ENCODE measurements at regions of chr6 and their contacts with region 1.

Region 1: GRCh38 chr6:7725849-7726415 is at the start of gene BMP6:
- DNase-seq: peak; percentile 69
- ATAC-seq: peak; percentile 77
- H3K4me3 ChIP-seq: peak within 1 kb of the TSS; percentile 61 to 66
- H3K27ac ChIP-seq: no peak within 1 kb of the TSS
- H3K4me1 ChIP-seq: peaks cover 24% of the 10 kb centered on the region
- H3K27me3 ChIP-seq: no peaks in the 10 kb centered on the region
- CTCF ChIP-seq: no peak
- total RNA-seq, gene BMP6: 13.6 TPM

Region 2: DNA sequence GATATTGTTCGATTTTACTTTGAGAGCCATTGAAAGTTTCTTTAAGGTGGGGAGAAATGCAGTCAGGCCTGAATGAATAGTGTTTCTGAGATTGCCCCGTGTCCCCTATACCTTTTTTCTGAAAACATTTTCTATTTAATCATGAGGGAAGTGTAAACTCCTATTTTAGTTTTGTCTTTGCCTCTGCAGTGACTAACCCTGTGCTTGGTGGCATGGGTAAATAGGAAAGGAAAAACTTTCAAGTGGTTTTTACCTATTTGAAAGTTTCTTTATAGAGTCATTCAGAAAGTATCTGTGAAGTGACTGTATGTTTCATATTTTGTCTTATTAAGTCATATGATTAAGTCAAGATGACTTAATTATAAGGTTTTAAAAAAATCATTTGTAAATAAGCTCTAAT is 121.4 kb before region 1 on chr6:
- CTCF ChIA-PET with region 1: no interaction called
- POLR2A ChIA-PET with region 1: no interaction called
- in situ Hi-C with region 1: no loop called
- intact Hi-C with region 1: no loop called
- DNase-seq: no peak
- ATAC-seq: no peak
- H3K4me3 ChIP-seq: no peak overlapping the region
- H3K27ac ChIP-seq: no peak overlapping the region
- H3K4me1 ChIP-seq: no peaks in the 10 kb centered on the region
- H3K27me3 ChIP-seq: no peaks in the 10 kb centered on the region
- CTCF ChIP-seq: no peak

Region 3: DNA sequence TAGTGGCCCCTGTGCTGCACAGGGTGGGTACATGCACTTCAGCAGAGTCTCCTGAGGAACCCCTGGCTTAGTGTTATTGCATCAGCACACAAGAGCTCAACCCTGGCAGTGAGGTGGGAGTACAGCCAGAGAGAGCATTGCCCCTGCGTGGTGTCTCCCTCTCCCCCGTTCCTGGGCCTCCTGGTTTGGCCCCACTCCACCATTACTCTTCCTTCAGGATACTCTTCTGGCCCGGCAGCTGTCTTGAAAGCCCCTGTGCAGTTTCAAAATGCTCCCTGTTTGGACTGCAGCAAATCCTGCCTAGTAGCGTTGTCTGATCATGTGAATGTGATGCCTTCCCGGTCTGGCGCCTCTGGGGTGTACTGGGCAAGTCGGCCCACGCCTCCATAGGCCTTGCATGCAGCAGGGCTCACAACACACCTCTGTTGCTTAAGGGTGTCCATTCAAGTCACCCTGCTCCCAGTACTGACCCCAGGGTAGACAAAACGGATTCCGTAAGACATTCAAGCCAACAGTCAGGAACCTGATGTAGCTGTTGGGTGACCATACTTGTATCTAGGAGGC is 152.6 kb after region 1 on chr6:
- CTCF ChIA-PET with region 1: interaction called, 7 read pairs
- POLR2A ChIA-PET with region 1: no interaction called
- in situ Hi-C with region 1: no loop called
- intact Hi-C with region 1: loop called (anchors 10 kb)
- DNase-seq: no peak
- ATAC-seq: peak; percentile 24; the same call in 1 of the 2 replicates
- H3K4me3 ChIP-seq: no peak overlapping the region
- H3K27ac ChIP-seq: no peak overlapping the region
- H3K4me1 ChIP-seq: no peaks in the 10 kb centered on the region
- H3K27me3 ChIP-seq: no peaks in the 10 kb centered on the region
- CTCF ChIP-seq: no peak

Region 4: GRCh38 chr6:7992002-7992815 is 266.3 kb after region 1 on chr6:
- CTCF ChIA-PET with region 1: interaction called, 3 read pairs
- POLR2A ChIA-PET with region 1: no interaction called
- in situ Hi-C with region 1: no loop called
- intact Hi-C with region 1: loop called (anchors 5 kb)
- DNase-seq: no peak
- ATAC-seq: peak; percentile 84
- H3K4me3 ChIP-seq: no peak overlapping the region
- H3K27ac ChIP-seq: no peak overlapping the region
- H3K4me1 ChIP-seq: no peaks in the 10 kb centered on the region
- H3K27me3 ChIP-seq: no peaks in the 10 kb centered on the region
- CTCF ChIP-seq: peak; percentile 61

Region 5: GRCh38 chr6:8059129-8059528 is 333.2 kb after region 1 on chr6:
- CTCF ChIA-PET with region 1: interaction called, 5 read pairs
- POLR2A ChIA-PET with region 1: no interaction called
- in situ Hi-C with region 1: no loop called
- intact Hi-C with region 1: loop called (anchors 5 kb)
- DNase-seq: no peak
- ATAC-seq: no peak
- H3K4me3 ChIP-seq: no peak overlapping the region
- H3K27ac ChIP-seq: no peak overlapping the region
- H3K4me1 ChIP-seq: peaks cover 10% of the 10 kb centered on the region; the same call in 1 of the 2 replicates
- H3K27me3 ChIP-seq: no peaks in the 10 kb centered on the region
- CTCF ChIP-seq: peak; percentile 41; the same call in 1 of the 2 replicates